ENCODE measurements at regions of chr9 and their contacts with region 1.

Region 1: DNA sequence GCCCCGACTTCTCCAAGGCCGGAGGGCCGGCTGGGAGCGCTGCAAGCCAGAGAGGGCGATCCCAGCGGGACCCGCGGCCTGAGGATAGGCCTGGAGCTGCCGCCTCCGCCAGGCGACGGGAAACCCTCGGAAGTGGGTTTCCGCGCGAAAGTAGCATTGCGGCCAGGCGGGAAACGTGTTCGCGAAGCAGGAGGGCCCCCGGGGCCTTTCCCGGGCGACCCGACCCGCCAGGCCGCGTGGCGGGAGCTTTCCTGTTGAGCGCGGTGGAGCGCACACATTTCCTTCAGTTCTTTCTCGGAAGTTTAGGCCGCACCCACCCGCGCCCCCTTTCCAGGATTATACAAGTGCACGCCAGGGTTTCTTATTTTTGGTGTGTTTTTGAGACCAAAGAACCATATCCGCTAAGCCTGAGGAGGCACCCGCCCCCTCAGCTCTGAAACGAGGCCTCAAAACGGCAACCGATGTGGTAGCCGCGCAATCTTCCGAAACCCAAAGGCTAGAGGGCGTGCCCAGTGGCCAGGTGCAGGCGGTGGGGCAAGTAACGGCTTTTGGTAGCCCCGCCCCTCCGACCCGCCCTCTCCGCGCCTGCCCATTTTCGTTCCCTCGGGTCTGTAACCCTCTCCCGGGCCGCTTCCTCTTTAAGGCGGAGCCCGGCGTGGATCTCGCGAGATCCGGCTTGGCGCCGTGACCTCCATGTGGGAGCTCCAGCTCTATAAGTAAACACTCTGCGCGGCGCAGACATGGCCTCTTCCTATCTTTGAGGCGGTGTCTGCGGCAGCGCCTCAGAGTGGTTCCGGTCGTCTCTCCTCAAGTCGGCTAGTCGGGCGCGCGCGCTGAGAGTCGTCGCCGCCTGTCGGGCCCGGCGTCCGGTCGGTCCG is at the start of gene UHRF2:
- DNase-seq: peak; percentile 96 to 99 (median 98)
- H3K4me3 ChIP-seq: peak within 1 kb of the TSS; percentile 77 to 91
- H3K4me3 Mint-ChIP-seq: peak within 1 kb of the TSS; percentile 88 to 94 (median 92)
- H3K27ac ChIP-seq: peak within 1 kb of the TSS; percentile 72
- H3K27ac Mint-ChIP-seq: peak within 1 kb of the TSS; percentile 94 to 98 (median 96)
- H3K4me1 ChIP-seq: peaks cover 42% of the 10 kb centered on the region
- H3K4me1 Mint-ChIP-seq: peaks cover 28 to 45% (median 35%) of the 10 kb centered on the region in 4 donors
- H3K27me3 ChIP-seq: no peaks in the 10 kb centered on the region
- H3K27me3 Mint-ChIP-seq: peaks cover 0 to 1% of the 10 kb centered on the region in 2 donors
- total RNA-seq, gene UHRF2: 124 to 128 TPM

Region 2: DNA sequence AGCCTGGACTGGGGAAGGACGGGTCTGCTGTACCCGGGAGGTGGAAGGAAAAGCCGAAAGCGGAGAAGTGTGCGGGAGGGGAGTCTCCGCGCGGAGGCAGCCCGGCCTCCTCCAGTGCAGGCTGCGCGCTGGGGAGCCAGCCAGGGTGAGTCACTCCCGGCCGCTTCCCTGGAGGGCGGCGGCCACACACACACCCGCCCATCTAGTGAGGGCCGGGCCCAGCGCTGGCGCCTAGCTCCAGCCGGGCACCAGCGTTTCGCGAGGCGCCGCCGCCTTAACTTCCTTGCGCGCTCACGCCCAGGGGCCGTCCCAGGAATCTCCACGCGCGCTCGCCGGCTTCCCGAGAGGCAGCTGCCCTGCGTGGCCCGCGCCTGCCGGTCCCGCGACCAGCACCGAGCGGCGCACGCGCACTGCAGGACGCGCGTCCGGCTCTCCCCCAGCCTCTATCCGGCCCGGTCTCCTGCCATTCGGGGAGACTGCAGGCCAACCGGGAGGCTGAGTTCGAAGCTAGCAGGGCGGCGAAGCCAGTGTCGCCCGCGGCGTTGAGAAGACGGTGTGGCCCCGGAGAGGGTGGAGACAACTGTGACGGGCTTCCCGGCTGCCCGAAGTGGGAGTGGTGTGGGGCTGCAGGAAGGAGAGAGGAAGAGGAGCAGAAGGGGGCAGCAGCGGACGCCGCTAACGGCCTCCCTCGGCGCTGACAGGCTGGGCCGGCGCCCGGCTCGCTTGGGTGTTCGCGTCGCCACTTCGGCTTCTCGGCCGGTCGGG is 1427.9 kb before region 1 on chr9 and contains the start of gene JAK2:
- CTCF ChIA-PET with region 1: no interaction called
- POLR2A ChIA-PET with region 1: no interaction called
- intact Hi-C with region 1: loop called (anchors 10 kb)
- DNase-seq: peak; percentile 82 to 87 (median 83)
- H3K4me3 ChIP-seq: peak within 1 kb of the TSS; percentile 53
- H3K4me3 Mint-ChIP-seq: peak within 1 kb of the TSS; percentile 90 to 97 (median 96)
- H3K27ac ChIP-seq: peak within 1 kb of the TSS; percentile 73
- H3K27ac Mint-ChIP-seq: peak within 1 kb of the TSS; percentile 83 to 97 (median 94)
- H3K4me1 ChIP-seq: peaks cover 45% of the 10 kb centered on the region
- H3K4me1 Mint-ChIP-seq: peaks cover 15 to 30% (median 24%) of the 10 kb centered on the region in 4 donors
- H3K27me3 ChIP-seq: no peaks in the 10 kb centered on the region
- H3K27me3 Mint-ChIP-seq: no peaks in the 10 kb centered on the region
- total RNA-seq, gene JAK2: 17.0 to 19.9 TPM

Region 3: GRCh38 chr9:6008169-6008979 is 404.4 kb before region 1 on chr9:
- CTCF ChIA-PET with region 1: no interaction called
- POLR2A ChIA-PET with region 1: interaction called, 24 read pairs
- intact Hi-C with region 1: loop called (anchors 1 kb)
- DNase-seq: peak; percentile 90 to 99 (median 95)
- H3K4me3 ChIP-seq: peak overlapping the region in 1 of 2 donors; percentile 82
- H3K4me3 Mint-ChIP-seq: peak overlapping the region; percentile 69 to 93 (median 82)
- H3K27ac ChIP-seq: peak overlapping the region; percentile 83
- H3K27ac Mint-ChIP-seq: peak overlapping the region; percentile 91 to 96 (median 94)
- H3K4me1 ChIP-seq: peaks cover 45% of the 10 kb centered on the region
- H3K4me1 Mint-ChIP-seq: peaks cover 28 to 76% (median 45%) of the 10 kb centered on the region in 4 donors
- H3K27me3 ChIP-seq: no peaks in the 10 kb centered on the region
- H3K27me3 Mint-ChIP-seq: no peaks in the 10 kb centered on the region

Region 4: GRCh38 chr9:6353851-6354686 is 58.7 kb before region 1 on chr9:
- CTCF ChIA-PET with region 1: interaction called, 5 read pairs
- POLR2A ChIA-PET with region 1: interaction called, 5 read pairs
- intact Hi-C with region 1: loop called (anchors 1 kb)
- DNase-seq: peak in 4 of 5 donors; percentile 51 to 66 (median 59)
- H3K4me3 ChIP-seq: no peak overlapping the region
- H3K4me3 Mint-ChIP-seq: no peak overlapping the region
- H3K27ac ChIP-seq: no peak overlapping the region
- H3K27ac Mint-ChIP-seq: no peak overlapping the region
- H3K4me1 ChIP-seq: no peaks in the 10 kb centered on the region
- H3K4me1 Mint-ChIP-seq: no peaks in the 10 kb centered on the region
- H3K27me3 ChIP-seq: no peaks in the 10 kb centered on the region
- H3K27me3 Mint-ChIP-seq: peaks cover 1 to 5% of the 10 kb centered on the region in 2 donors

Region 5: GRCh38 chr9:6484210-6484609 is 71.5 kb after region 1 on chr9:
- CTCF ChIA-PET with region 1: interaction called, 4 read pairs
- POLR2A ChIA-PET with region 1: interaction called, 10 read pairs
- intact Hi-C with region 1: loop called (anchors 5 kb)
- DNase-seq: no peak
- H3K4me3 ChIP-seq: no peak overlapping the region
- H3K4me3 Mint-ChIP-seq: no peak overlapping the region
- H3K27ac ChIP-seq: no peak overlapping the region
- H3K27ac Mint-ChIP-seq: peak overlapping the region in 2 of 7 donors; percentile 35 to 54
- H3K4me1 ChIP-seq: no peaks in the 10 kb centered on the region
- H3K4me1 Mint-ChIP-seq: peaks cover 0 to 9% (median under 1%) of the 10 kb centered on the region in 4 donors
- H3K27me3 ChIP-seq: no peaks in the 10 kb centered on the region
- H3K27me3 Mint-ChIP-seq: no peaks in the 10 kb centered on the region

Region 6: GRCh38 chr9:6715755-6716643 is 303.3 kb after region 1 on chr9:
- CTCF ChIA-PET with region 1: no interaction called
- POLR2A ChIA-PET with region 1: interaction called, 12 read pairs
- intact Hi-C with region 1: no loop called
- DNase-seq: peak; percentile 58 to 70 (median 65)
- H3K4me3 ChIP-seq: peak overlapping the region; percentile 11 to 57
- H3K4me3 Mint-ChIP-seq: peak overlapping the region; percentile 85 to 94 (median 88)
- H3K27ac ChIP-seq: peak overlapping the region; percentile 66
- H3K27ac Mint-ChIP-seq: peak overlapping the region; percentile 53 to 93 (median 86)
- H3K4me1 ChIP-seq: peaks cover 12% of the 10 kb centered on the region
- H3K4me1 Mint-ChIP-seq: peaks cover 4 to 10% (median 6%) of the 10 kb centered on the region in 4 donors
- H3K27me3 ChIP-seq: no peaks in the 10 kb centered on the region
- H3K27me3 Mint-ChIP-seq: no peaks in the 10 kb centered on the region

Region 7: DNA sequence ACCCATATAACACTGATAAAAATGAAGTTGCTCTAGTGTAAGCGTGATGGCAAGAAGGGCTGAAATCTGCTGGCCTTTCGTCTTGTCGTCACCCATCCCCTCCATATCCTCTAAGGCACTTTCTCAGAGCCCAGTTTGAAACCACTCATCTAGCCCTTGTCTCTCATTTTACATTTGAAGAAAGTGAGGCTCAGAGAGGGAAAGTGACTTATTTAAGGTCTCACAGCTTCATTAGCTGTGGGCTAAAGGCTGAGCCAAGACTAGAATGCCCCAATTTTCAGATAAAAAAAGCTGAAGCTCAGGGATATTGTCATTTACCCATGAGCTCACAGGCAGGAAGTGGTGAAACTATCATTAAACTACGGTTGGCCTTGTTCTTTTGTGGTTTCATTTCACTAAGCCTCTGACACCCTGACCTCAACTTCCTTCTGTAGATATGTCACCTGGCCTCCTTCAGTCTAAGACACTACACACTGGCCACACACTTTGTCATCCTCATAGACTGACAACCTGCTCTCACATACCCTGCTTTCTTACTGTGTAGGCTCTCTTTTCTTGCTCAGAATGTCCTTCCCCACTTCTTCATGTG is 1563.5 kb after region 1 on chr9:
- CTCF ChIA-PET with region 1: no interaction called
- POLR2A ChIA-PET with region 1: no interaction called
- intact Hi-C with region 1: loop called (anchors 2 kb)
- DNase-seq: peak; percentile 84 to 90 (median 89)
- H3K4me3 ChIP-seq: no peak overlapping the region
- H3K4me3 Mint-ChIP-seq: peak overlapping the region; percentile 44 to 81 (median 71)
- H3K27ac ChIP-seq: peak overlapping the region; percentile 51
- H3K27ac Mint-ChIP-seq: peak overlapping the region; percentile 83 to 97 (median 94)
- H3K4me1 ChIP-seq: peaks cover 64% of the 10 kb centered on the region
- H3K4me1 Mint-ChIP-seq: peaks cover 42 to 65% (median 53%) of the 10 kb centered on the region in 4 donors
- H3K27me3 ChIP-seq: no peaks in the 10 kb centered on the region
- H3K27me3 Mint-ChIP-seq: no peaks in the 10 kb centered on the region